GM12878 (cell line): ENCODE measurements at regions of chr2 and their contacts with region 1.

Region 1: DNA sequence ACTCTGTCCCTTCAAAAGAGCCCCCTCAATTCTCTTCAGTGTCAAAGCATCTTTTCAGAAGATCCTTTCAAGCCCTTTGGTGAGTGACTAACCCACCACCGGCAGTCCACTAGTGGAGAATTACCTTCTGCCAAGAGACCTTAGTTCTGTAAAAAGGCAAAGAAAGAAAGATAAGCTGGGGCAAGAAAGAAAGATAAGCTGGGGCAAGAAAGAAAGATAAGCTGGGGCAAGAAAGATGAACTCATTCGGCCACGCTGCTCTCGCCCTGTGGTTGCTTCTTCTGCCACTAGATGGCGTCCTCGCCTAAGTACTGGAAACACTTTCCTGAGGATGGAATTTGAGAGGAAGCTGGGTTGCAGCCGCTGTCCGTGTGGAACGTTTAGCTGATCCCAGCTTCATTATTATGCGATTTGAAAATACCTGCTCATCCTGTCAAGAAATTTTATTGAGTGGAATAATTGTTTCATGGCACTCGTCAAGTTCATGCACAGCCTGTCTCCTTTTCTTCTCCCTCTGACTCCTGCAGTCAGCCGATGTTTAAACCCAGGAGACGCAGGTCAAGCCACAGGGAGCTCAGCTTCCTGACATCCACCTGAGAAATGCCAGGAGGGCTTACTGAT is 17.3 kb upstream of the ANXA4 start:
- DNase-seq: no peak
- ATAC-seq: peak; percentile 98
- H3K4me3 ChIP-seq: peak overlapping the region; percentile 69; the same call in 1 of the 2 replicates
- H3K27ac ChIP-seq: no peak overlapping the region
- H3K4me1 ChIP-seq: no peaks in the 10 kb centered on the region; the same call in 1 of the 2 replicates
- H3K27me3 ChIP-seq: no peaks in the 10 kb centered on the region
- CTCF ChIP-seq: peak; percentile 81 to 85 (median 82)
- EP300 ChIP-seq: no peak
- POLR2A ChIP-seq: no peak
- RAD21 ChIP-seq: peak; percentile 94

Region 2: DNA sequence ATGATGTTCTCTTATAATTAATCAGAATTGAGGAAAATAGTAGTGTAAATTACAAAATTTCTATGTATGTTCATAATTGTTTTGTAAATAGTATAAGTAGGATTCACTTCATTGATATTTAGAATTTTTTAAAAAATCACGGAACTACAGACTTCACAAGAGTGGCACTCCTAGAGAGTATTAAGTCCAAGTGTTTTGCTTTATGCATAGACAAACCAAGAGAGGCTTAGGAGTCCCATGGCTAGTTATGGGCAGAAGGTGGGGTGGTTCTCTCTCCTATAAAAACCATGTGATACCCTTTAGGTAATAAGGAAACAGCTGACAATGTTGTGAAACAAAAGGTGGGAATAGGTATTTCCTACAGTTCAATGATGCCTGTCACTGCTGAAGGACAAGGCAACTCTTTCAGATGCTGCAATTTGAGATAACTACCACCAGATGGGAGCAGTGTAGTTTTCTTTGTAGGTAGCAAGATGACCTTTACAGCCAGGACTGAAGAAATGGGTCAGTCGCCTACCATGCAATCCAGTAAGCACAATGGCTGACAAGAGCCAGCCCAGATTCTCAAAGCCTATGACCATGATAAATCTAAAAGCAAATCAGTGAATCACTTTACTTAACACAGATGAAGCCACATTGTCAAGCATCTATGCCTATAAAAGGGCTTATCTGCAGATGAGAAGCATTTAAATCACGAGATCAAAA is 165.1 kb before region 1 on chr2:
- CTCF ChIA-PET with region 1: interaction called, 293 read pairs
- POLR2A ChIA-PET with region 1: no interaction called
- RAD21 ChIA-PET with region 1: interaction called, 10 read pairs
- SMC1A ChIA-PET with region 1: interaction called, 16 read pairs
- in situ Hi-C with region 1: no loop called
- intact Hi-C with region 1: no loop called
- DNase-seq: no peak
- ATAC-seq: peak; percentile 94
- H3K4me3 ChIP-seq: no peak overlapping the region
- H3K27ac ChIP-seq: no peak overlapping the region
- H3K4me1 ChIP-seq: peaks cover 9% of the 10 kb centered on the region
- H3K27me3 ChIP-seq: no peaks in the 10 kb centered on the region
- CTCF ChIP-seq: peak; percentile 74 to 85 (median 77)
- EP300 ChIP-seq: no peak
- POLR2A ChIP-seq: no peak
- RAD21 ChIP-seq: peak; percentile 93

Region 3: DNA sequence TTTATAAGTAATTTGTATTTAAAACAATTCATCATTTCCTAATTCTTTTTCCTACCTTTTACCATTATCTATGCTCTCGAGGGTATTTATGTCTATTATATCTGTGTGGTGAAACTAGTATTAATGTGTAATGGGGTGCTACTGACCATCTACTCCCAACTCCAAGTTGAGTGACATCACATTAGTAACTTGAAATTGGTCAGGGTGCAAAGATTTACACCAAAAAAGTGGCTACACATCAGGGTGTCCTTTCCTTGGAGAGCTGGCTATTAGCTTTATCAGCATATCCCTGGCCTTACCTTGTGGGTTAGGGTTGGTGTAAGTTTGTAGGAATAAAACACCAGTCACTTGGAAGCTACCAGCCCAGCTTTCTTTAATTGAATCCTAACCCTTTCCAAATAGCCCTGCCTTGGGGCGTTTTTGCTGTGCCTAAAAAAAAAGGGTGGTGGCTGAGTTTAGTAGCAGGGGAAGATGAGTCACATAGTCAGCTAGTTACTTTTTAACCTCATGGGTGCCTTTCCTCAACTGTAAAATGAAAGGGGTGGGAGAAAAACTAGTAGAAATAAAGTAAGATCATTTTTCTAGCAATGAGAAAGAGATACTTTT is 31.3 kb after region 1 on chr2:
- CTCF ChIA-PET with region 1: interaction called, 17 read pairs
- POLR2A ChIA-PET with region 1: no interaction called
- RAD21 ChIA-PET with region 1: interaction called, 39 read pairs
- SMC1A ChIA-PET with region 1: interaction called, 15 read pairs
- in situ Hi-C with region 1: no loop called
- intact Hi-C with region 1: no loop called
- DNase-seq: no peak
- ATAC-seq: peak; percentile 90
- H3K4me3 ChIP-seq: no peak overlapping the region
- H3K27ac ChIP-seq: no peak overlapping the region
- H3K4me1 ChIP-seq: peaks cover 7% of the 10 kb centered on the region
- H3K27me3 ChIP-seq: no peaks in the 10 kb centered on the region
- CTCF ChIP-seq: no peak
- EP300 ChIP-seq: no peak
- POLR2A ChIP-seq: no peak
- RAD21 ChIP-seq: no peak

Region 4: DNA sequence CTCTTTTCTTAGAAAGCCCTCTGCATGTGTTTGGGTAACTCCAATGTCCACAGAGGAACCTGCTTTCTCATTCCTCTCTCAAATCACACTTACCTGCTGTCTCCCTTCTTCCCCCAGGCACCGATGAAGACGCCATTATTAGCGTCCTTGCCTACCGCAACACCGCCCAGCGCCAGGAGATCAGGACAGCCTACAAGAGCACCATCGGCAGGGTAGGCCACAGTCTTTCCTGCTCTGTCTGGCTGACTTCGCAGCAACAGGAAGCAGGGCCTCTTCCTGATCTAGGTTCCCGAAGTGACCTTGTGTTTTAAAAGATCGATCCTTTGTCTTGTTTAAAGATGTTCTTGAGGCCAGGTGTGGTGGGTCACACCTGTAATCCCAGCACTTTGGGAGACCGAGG is 79.8 kb after region 1 on chr2:
- CTCF ChIA-PET with region 1: interaction called, 408 read pairs
- POLR2A ChIA-PET with region 1: interaction called, 3 read pairs
- RAD21 ChIA-PET with region 1: interaction called, 45 read pairs
- SMC1A ChIA-PET with region 1: interaction called, 29 read pairs
- in situ Hi-C with region 1: no loop called
- intact Hi-C with region 1: no loop called
- DNase-seq: no peak
- ATAC-seq: no peak
- H3K4me3 ChIP-seq: no peak overlapping the region
- H3K27ac ChIP-seq: peak overlapping the region; percentile 0; the same call in 1 of the 2 replicates
- H3K4me1 ChIP-seq: peaks cover 47% of the 10 kb centered on the region
- H3K27me3 ChIP-seq: no peaks in the 10 kb centered on the region
- CTCF ChIP-seq: no peak
- EP300 ChIP-seq: no peak
- POLR2A ChIP-seq: no peak
- RAD21 ChIP-seq: no peak

Region 5: GRCh38 chr2:69848201-69848770 is 123.6 kb after region 1 on chr2:
- CTCF ChIA-PET with region 1: interaction called, 5 read pairs
- POLR2A ChIA-PET with region 1: no interaction called
- RAD21 ChIA-PET with region 1: interaction called, 5 read pairs
- SMC1A ChIA-PET with region 1: interaction called, 13 read pairs
- in situ Hi-C with region 1: no loop called
- intact Hi-C with region 1: no loop called
- DNase-seq: no peak
- ATAC-seq: no peak
- H3K4me3 ChIP-seq: no peak overlapping the region
- H3K27ac ChIP-seq: no peak overlapping the region
- H3K4me1 ChIP-seq: no peaks in the 10 kb centered on the region
- H3K27me3 ChIP-seq: no peaks in the 10 kb centered on the region
- CTCF ChIP-seq: no peak
- EP300 ChIP-seq: no peak
- POLR2A ChIP-seq: no peak
- RAD21 ChIP-seq: no peak

Region 6: DNA sequence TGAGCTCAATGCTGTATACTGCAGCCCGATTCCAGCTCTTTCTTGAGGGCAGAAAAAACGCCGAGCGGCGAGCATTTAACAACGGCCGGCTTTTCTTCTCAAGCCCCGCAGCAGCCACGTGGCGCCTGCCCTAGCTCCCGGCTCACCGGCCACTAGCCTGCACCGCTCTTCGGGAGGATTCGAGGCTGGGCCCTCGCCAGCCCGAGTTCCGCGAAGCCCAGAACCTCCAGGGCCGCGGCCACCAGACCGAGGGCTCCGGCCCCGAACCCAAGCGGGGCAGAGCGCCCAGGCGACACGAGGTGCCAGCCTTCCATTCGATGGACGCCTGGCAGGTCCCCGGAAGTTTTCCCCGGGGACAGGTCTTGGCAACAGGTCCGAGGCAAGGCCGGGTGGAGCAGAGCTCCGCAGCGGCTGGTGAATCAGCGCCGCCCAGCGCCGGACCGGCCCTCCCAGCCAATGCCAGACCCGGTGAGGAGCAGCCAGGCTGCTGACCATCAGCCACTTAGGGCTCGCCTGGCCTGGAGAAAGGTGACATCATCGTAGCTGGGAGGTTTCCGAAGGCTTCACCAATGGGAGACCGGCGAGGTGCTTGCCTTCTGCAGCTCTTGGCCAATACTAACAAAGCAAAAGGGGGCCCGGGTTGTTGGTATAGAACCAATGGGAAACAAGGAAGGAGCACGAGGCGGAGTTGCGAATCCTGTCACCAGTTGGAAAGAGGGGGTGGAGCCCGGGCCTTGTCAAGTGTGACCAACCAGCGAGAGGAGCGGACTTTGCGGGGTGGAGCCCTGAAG is 189.7 kb after region 1 on chr2:
- CTCF ChIA-PET with region 1: interaction called, 73 read pairs
- POLR2A ChIA-PET with region 1: interaction called, 4 read pairs
- RAD21 ChIA-PET with region 1: interaction called, 58 read pairs
- SMC1A ChIA-PET with region 1: interaction called, 55 read pairs
- in situ Hi-C with region 1: no loop called
- intact Hi-C with region 1: loop called (anchors 5 kb)
- DNase-seq: peak; percentile 100
- ATAC-seq: peak; percentile 93
- H3K4me3 ChIP-seq: peak overlapping the region; percentile 68
- H3K27ac ChIP-seq: peak overlapping the region; percentile 86
- H3K4me1 ChIP-seq: peaks cover 8% of the 10 kb centered on the region; the same call in 1 of the 2 replicates
- H3K27me3 ChIP-seq: no peaks in the 10 kb centered on the region
- CTCF ChIP-seq: peak in 1 of 3 experiments; percentile 48; a peak in 2 of 6 replicates
- EP300 ChIP-seq: no peak
- POLR2A ChIP-seq: peak; percentile 85
- RAD21 ChIP-seq: 0 out of 2 replicates have a peak, but pooled peaks have one; percentile 1